ENCODE measurements at regions of chr9 and their contacts with region 1.

Region 1: DNA sequence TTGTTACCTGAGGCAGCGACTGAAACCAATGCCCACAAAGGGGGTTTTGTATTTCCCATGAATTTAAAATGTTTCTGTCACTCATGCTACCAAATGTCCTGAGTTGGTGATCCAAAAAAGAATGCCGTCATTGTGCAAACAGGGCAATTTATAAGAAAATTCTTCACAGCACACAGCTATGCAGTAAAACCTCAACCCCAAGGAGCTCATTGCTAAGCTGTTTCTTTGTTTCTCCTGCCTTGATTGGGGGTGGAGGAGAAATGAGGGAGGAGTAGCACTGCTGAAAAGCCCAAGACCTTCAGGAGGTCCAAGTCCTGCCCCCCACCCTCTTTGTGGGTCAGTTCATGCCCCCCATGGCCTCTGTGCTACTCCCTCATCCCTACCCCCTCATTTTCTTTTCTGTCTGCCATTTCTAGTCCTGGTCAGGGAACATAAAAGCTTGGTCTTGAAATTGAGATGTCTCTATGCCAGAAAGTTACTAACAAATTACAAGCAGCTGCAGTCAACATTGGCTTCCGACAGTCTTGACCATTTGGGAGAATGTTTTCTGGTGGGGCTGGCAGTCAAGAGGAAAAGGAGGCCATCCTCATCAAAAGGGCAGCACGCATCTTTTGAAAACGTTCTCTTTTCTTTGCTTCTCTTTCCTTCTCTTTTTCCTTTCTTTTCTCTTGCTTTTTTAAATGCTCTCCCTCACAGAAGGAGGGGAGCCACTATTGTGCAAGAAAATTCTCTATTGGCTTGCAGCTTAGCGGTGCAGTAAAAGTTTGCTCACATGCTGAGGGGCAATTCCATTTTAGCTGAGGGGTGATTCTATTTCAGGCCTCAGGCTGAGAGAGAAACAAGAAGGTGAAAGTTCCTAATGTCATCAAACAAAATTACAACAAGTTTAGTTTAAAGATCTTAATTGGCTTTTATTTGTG is 133.4 kb downstream of the GCNT1 start:
- DNase-seq: no peak

Region 2: GRCh38 chr9:76393963-76394679 is 198.2 kb before region 1 on chr9 and contains the start of gene RFK:
- intact Hi-C with region 1: no loop called
- DNase-seq: peak; percentile 86 to 98 (median 94)

Region 3: DNA sequence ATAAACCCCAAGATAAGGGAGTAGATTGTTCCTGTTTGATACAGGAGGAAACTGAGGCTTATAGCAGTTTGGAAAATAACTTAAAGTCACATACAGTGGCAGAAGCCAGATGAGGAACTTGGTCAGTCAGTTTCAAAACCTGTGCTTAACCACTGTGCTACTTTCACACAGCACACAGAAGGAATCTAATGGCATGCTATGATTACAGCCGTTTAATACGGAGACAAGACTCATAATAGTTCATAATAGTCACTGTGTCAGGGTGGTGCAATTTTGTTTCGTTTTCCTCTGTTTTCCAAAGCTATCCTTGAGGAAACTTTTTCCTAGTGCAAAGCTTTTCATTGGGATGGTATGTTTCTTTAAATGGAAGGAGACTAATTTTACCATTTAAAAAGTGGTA is 21.1 kb before region 1 on chr9:
- intact Hi-C with region 1: no loop called
- DNase-seq: no peak

Region 4: GRCh38 chr9:76624391-76625048 is 32.2 kb after region 1 on chr9:
- intact Hi-C with region 1: no loop called
- DNase-seq: no peak

Region 5: GRCh38 chr9:76643399-76644117 is 51.2 kb after region 1 on chr9:
- intact Hi-C with region 1: loop called (anchors 10 kb)
- DNase-seq: no peak

Measured in posterior cingulate gyrus (tissue), 11 donors.